HAP-1 (cell line): ENCODE measurements at regions of chr3 and their contacts with region 1.

Region 1: GRCh38 chr3:168511428-168512014 is 415.8 kb upstream of the GOLIM4 start:
- DNase-seq: peak; percentile 14 to 71
- H3K4me3 ChIP-seq: no peak overlapping the region
- H3K4me1 ChIP-seq: peaks cover 48% of the 10 kb centered on the region
- H3K27me3 ChIP-seq: no peaks in the 10 kb centered on the region

Region 2: GRCh38 chr3:168671082-168671481 is 159.6 kb after region 1 on chr3:
- in situ Hi-C with region 1: no loop called
- DNase-seq: peak; percentile 55 to 74
- H3K4me3 ChIP-seq: no peak overlapping the region
- H3K4me1 ChIP-seq: peaks cover 11% of the 10 kb centered on the region
- H3K27me3 ChIP-seq: no peaks in the 10 kb centered on the region

Region 3: DNA sequence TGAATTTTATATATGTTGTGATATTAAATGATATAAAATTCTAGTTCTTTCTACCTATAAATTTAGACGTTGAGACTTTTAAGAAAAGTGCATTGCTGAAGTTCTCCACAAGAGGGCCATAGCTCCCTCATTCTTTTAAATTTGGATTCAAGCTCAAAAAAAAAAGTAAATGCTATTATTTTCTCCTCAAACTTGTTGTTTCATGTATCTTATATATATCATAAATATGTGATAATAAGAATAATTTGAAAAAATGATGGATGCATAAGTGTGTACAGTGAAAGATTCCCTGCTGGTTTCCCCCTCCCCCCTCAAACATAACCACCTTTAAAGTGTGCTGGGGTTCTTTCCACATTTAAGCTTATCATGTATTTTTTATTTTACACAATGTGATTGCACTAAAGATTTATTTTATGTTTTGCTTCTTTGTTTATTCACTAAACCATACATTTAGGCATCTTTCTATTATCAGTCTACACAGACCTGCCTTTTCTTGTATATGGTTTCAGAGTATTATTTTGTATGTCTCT is 353.6 kb after region 1 on chr3:
- in situ Hi-C with region 1: loop called (anchors 25 kb)
- DNase-seq: peak; percentile 33 to 53
- H3K4me3 ChIP-seq: no peak overlapping the region
- H3K4me1 ChIP-seq: peaks cover 5% of the 10 kb centered on the region; the same call in 1 of the 2 replicates
- H3K27me3 ChIP-seq: no peaks in the 10 kb centered on the region

Region 4: DNA sequence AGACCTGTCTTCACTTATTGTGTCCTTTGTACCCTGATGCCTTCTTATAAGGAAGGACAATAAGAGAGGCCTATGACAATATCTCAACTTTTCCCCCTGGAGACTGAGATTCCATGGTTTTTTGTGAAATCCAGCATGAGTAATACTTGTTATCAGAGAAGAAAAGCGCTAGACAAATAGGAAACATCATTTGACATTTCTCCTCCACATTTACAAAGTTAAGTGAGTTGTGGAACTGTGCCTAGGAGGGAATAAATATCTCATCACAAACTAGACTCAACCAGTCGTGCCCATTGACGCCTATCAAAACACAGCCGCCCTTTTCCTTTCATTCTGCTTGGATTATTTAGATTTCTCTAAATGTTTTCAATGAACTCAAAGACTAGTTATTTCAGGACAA is 898.9 kb after region 1 on chr3:
- in situ Hi-C with region 1: no loop called
- DNase-seq: no peak
- H3K4me3 ChIP-seq: no peak overlapping the region
- H3K4me1 ChIP-seq: peaks cover 27% of the 10 kb centered on the region
- H3K27me3 ChIP-seq: no peaks in the 10 kb centered on the region